Activated CD8-positive, alpha-beta T cell treated with anti-CD3 and anti-CD28 coated beads, Interleukin-2, amount 10 ng/mL, durations not matched to agents 7 days and 5 days (primary cell): ENCODE measurements at regions of chr10 and their contacts with region 1.

Region 1: DNA sequence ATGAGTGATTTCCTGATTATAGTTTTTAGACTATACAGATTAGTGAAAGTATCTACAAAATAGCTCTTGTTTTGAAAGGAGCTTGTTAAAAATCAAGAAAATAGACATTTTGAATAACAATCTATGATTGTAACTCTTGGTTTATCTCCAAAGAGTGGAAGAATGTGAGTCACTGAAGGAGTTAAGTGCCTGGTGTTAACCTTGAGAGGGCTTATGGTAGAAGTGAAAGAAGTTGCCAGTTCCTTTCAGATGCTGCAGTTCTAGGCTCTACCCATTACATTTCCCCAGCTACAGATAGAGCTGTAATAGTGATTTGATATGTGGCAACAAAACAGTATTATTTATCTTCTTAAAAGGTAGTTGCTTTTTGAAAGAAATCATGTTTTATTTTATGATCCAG is 12.7 kb downstream of the NRBF2 start:
- DNase-seq: no peak
- ATAC-seq: no peak
- H3K4me3 Mint-ChIP-seq: no peak overlapping the region
- H3K27ac Mint-ChIP-seq: no peak overlapping the region
- H3K4me1 Mint-ChIP-seq: peaks cover 25% of the 10 kb centered on the region
- H3K27me3 Mint-ChIP-seq: no peaks in the 10 kb centered on the region

Region 2: DNA sequence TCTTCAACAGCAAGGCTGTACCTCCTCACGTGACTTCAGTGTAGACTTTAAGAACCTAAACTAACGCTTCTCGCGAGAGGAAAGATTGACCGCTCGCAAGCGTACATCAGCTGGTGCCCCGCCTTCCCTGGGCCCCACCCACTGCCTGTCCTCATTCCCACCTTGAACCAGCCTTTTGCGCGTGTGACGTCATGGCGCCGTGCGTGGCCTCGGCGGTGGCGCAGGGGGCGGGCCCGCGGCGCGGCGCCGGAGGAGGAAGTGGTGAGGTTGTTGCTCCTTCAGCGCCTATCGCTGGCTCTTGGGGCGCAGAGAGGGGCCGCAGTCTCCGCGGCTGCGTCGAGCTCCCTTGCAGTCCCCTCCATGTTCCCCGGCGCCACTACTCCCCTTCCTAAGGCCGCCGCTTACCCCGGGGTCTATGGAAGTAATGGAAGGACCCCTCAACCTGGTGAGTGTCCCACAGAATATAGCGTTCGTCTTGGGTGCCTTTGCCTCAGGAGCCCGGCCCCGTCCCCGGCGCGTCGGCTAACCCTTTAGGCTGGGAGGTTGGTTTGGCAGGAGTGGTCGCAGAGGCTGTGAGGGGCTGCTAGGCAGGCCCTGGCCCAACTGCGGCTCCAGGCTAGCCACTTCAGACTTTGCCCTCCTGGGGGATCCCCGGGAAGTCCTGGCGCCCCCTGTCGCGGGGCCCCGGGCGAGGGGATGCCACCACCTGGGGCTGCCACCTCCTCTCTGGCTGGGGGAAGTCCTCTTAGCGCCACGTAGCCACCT is 12.5 kb before region 1 on chr10 and contains the start of gene NRBF2:
- CTCF ChIA-PET with region 1: interaction called, 12 read pairs
- POLR2A ChIA-PET with region 1: interaction called, 7 read pairs
- DNase-seq: peak; percentile 98
- ATAC-seq: peak; percentile 96
- H3K4me3 Mint-ChIP-seq: peak within 1 kb of the TSS; percentile 91
- H3K27ac Mint-ChIP-seq: peak within 1 kb of the TSS; percentile 97
- H3K4me1 Mint-ChIP-seq: peaks cover 38% of the 10 kb centered on the region
- H3K27me3 Mint-ChIP-seq: no peaks in the 10 kb centered on the region
- total RNA-seq, gene NRBF2: 21.8 to 22.6 TPM

Region 3: GRCh38 chr10:63175534-63175933 is 29.8 kb after region 1 on chr10:
- CTCF ChIA-PET with region 1: no interaction called
- POLR2A ChIA-PET with region 1: no interaction called
- DNase-seq: no peak
- ATAC-seq: no peak
- H3K4me3 Mint-ChIP-seq: no peak overlapping the region
- H3K27ac Mint-ChIP-seq: no peak overlapping the region
- H3K4me1 Mint-ChIP-seq: peaks cover 61% of the 10 kb centered on the region
- H3K27me3 Mint-ChIP-seq: no peaks in the 10 kb centered on the region